Ascending aorta (tissue), 2 donors: ENCODE measurements at regions of chr1 and their contacts with region 1.

Region 1: DNA sequence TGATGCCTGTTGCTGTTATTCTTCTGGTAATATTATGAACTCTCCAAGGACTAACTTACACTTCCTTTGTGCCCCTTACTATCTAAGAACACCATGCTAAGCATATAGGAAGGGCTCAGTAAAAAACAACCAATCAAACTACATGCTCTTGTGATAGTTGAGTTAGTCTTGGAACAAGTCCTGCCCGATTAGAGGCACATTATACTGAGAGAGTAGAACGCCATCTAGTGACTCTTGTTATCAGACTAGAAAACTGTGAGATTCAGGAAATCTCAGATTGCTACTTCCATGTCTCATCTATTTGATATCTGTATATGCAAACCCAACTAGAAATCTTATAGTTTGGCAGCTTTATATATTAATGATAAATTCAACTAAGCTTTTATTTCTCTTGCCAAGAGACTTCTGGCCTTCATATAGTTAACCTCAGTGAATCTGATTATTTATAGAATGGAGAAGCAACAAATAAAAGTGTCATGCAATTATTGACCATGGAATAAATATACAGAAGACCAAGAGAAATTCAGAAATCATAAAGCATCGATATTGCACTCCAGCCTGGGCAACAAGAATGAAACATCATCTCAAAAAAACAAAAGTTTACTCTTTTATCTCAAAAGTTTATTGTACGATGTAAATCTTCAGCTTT is 7.8 kb upstream of the SRRM1 start:
- DNase-seq: no peak
- H3K4me3 ChIP-seq: no peak overlapping the region
- H3K27ac ChIP-seq: no peak overlapping the region
- H3K4me1 ChIP-seq: no peaks in the 10 kb centered on the region
- H3K27me3 ChIP-seq: no peaks in the 10 kb centered on the region
- CTCF ChIP-seq: peak; percentile 28 to 56 (median 31)

Region 2: GRCh38 chr1:24201941-24202440 is 433.3 kb before region 1 on chr1:
- intact Hi-C with region 1: loop called (anchors 5 kb)
- DNase-seq: peak; percentile 39 to 90
- H3K4me3 ChIP-seq: no peak overlapping the region
- H3K27ac ChIP-seq: no peak overlapping the region
- H3K4me1 ChIP-seq: no peaks in the 10 kb centered on the region
- H3K27me3 ChIP-seq: no peaks in the 10 kb centered on the region
- CTCF ChIP-seq: peak; percentile 36 to 65 (median 61)

Region 3: DNA sequence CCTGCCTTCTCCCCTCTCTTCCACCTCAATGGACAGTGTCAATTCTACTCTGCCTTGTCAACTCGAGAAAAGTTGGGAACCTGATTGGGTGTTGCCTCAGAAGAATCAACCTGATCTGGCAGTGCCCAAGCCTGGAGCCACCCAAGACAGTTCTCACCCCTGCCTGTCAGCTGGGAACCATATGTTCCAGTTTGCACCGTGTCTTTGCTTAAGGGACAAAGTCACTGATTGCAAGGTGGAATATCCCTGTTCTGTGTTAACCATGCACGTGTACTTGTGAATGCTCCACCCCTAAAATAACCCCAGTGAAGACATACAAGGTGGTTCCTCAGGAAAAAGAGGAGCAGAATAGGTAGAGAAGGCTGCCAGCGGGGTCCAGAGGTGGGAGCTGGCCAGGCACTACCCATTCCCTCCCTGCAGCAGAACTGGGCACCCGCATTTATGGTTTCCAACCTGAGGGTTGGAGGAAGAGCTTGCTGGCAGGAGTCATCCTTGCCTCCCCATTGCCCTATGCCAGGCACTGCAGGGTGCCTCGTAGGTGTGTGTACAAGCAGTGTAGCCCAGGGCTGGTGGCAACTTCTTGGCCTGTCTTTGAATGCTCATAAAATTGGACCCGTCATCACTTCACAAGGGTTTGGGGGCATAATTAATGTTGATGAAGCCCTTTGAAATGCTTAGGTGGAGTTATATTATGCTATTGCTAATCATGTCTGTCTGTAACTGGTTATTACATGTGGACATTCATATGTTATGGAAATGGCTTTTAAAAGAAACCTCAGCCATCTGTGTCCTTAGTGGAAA is 208.4 kb before region 1 on chr1:
- intact Hi-C with region 1: no loop called
- DNase-seq: no peak
- H3K4me3 ChIP-seq: no peak overlapping the region
- H3K27ac ChIP-seq: no peak overlapping the region
- H3K4me1 ChIP-seq: no peaks in the 10 kb centered on the region
- H3K27me3 ChIP-seq: no peaks in the 10 kb centered on the region
- CTCF ChIP-seq: no peak

Region 4: GRCh38 chr1:24567792-24568388 is 67.4 kb before region 1 on chr1:
- intact Hi-C with region 1: no loop called
- DNase-seq: no peak
- H3K4me3 ChIP-seq: no peak overlapping the region
- H3K27ac ChIP-seq: no peak overlapping the region
- H3K4me1 ChIP-seq: no peaks in the 10 kb centered on the region
- H3K27me3 ChIP-seq: no peaks in the 10 kb centered on the region
- CTCF ChIP-seq: no peak

Region 5: DNA sequence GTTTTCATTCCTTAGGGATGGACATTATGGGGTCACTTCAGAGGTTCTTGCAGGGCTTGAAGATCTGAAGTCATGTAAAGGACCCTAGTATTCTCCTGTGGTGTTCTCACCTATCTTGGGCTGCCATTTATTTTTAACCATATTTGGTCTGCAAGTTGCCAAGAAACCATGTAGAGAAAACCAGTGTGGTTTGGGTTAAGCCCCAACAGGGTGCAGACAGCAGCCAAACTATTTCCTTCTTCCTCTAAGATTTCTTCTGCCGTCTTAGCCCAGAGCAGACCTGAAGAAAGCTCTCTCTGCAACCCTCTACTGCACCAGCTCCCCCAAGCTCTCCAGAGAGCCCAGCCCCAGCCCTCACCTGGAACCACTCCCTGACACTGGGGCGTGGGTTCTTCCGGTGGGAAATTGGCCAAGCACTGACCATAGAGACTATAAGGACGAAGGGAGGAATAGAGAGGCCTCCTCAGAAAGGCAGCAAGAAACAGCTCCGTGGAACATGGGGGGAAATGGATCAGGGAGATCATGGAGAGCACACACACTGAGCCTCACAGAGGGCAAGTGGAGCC is 460.4 kb after region 1 on chr1:
- intact Hi-C with region 1: no loop called
- DNase-seq: no peak
- H3K4me3 ChIP-seq: no peak overlapping the region
- H3K27ac ChIP-seq: no peak overlapping the region
- H3K4me1 ChIP-seq: no peaks in the 10 kb centered on the region
- H3K27me3 ChIP-seq: no peaks in the 10 kb centered on the region
- CTCF ChIP-seq: no peak

Region 6: DNA sequence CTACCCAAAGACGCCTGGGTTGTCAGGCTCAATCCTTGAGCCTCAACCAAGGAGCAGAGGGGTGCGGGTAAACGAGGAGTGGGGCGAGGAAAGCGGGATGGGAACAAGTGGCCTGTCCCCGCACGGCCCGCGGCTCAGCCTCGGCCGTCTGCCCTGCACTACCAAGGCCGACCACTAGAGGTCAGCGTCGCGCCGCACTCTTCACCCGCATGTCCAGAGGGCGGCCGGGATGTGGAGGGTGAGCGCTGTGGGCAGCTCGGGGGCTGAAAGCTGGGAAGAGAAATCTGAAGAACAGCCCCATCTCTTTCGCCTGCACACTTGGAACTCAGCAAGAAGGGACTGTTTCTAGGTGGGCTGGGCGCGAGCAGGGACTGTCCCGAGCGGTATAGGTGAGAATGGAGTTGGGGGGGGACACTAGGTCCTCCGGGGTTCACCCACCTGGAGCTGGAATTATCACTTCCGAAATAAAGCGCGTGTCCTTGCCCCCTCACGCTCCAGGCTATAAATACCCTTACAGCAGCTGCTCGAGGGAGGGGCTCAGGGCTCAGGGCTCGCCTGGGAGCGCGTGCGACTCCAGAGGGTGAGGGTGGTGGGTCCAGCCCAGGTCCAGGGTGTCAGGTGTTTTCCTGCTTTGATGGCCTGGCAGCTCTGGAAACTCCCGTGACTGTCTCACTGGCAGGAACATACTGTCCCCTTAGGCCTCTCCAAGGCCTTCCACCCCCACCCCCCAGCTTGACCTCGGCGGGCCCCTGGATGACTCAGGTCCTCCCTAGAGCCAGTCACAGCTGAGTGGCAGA is 1400.8 kb after region 1 on chr1:
- intact Hi-C with region 1: no loop called
- DNase-seq: peak; percentile 20 to 87
- H3K4me3 ChIP-seq: peak overlapping the region; percentile 62 to 92
- H3K27ac ChIP-seq: peak overlapping the region; percentile 62 to 75
- H3K4me1 ChIP-seq: peaks cover 3 to 8% of the 10 kb centered on the region in 2 donors
- H3K27me3 ChIP-seq: no peaks in the 10 kb centered on the region
- CTCF ChIP-seq: peak; percentile 97 to 100 (median 100)